Right ventricle myocardium inferior (tissue), 1 donor: ENCODE measurements at regions of chr6 and their contacts with region 1.

Region 1: DNA sequence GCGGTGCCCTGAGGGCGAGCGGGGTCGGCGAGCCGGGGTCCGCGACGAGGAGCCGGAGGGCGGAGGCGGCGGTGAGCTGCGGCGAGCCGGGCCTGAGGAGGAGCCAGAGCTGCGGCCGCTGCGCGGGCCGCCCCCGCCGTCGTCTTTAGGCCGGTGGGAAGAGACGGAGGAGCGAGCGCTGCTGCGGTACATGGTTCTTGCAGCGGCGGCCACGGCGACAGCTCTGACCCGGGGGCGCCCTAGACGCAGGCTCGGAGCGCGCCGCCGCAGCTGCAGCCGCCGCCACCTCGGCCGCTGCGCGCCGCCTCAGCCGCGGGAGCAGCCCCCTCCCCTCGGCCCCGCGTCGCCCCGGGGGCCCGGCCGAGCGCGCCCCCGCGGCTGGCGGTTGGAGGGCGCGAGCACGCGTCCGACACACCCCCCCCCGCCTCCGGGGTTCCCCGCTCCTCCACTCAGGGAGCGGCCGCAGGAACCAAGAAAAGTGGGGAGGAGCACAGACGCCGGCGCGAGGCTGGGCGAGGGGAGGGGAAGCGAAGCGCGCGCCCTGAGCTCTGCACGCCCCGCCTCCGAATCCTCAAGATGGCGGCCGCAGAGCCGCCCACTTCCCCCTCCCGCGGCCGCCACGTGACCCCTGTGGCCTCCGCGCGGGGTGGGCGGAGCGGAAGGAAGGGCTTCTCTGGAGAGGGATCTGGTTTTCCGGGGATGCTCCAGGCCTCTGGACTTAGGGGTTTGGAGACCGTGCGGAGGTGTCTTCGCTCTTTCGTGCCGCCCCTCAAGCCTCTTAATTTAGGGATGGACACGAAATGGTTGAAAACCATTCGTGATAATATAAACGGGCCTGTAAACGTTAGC is at the start of gene ZNF318:
- DNase-seq: peak; percentile 99
- ATAC-seq: peak; percentile 99
- total RNA-seq, gene ZNF318: 11.3 TPM

Region 2: GRCh38 chr6:43328528-43328927 is 40.9 kb before region 1 on chr6:
- intact Hi-C with region 1: loop called (anchors 2 kb)
- DNase-seq: no peak
- ATAC-seq: peak; percentile 92

Region 3: GRCh38 chr6:43427406-43428111 is 58.2 kb after region 1 on chr6 and contains the start of gene ABCC10:
- intact Hi-C with region 1: loop called (anchors 2 kb)
- DNase-seq: peak; percentile 98
- ATAC-seq: peak; percentile 99
- total RNA-seq, gene ABCC10: 14.8 TPM